ENCODE measurements at regions of chr5 and their contacts with region 1.

Region 1: DNA sequence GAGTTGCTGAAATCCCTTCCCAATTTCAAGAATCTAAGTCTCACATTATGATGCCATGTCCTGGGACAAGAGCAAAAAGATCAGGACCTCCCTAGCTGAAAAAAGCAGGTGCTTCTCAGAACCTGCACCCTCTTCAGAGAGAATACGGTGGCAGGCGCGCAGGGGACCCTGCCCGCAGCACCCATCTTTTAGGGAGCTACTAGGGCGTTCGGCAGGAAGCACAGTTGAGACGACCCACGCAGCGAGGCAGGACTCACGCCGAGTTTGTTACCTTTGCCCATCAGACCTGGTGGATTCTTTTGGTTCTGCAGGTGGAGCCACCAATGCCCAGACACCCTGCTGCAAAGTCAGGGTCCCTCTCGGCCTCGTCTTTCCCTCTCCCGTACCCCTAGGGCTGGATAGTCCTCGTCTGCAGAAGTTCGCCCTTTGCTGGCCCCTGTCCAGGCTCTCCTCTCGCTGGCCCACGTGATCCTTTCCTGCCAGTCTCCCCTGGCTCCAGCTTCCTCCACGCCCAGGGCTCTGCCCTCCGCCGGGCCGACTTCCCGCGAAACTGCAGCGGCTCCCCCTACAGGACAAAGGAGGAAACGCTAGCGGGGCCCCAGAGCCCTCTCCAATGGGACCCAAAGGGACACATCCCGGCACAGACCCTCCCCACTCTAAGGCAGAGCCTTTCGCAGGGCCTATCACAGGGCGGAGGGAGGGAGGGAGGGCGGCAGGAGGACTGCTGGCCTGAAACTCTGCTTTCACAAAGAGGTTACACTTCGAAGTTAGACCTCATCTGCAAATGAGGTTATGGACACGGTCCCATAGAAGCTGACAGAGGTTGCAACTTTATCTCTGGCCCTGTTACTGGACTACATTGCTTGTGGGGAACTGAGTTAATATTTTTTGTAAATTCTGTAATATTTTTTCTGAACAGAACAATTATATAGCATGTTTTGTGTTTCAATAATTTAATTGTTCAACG is 28.8 kb downstream of the TMEM174 start:
- DNase-seq: peak; percentile 96
- ATAC-seq: peak; percentile 99
- H3K4me3 Mint-ChIP-seq: no peak overlapping the region
- H3K27ac Mint-ChIP-seq: no peak overlapping the region
- H3K4me1 Mint-ChIP-seq: peaks cover 9% of the 10 kb centered on the region
- H3K27me3 Mint-ChIP-seq: peaks cover 33% of the 10 kb centered on the region
- CTCF ChIP-seq: peak; percentile 89

Region 2: DNA sequence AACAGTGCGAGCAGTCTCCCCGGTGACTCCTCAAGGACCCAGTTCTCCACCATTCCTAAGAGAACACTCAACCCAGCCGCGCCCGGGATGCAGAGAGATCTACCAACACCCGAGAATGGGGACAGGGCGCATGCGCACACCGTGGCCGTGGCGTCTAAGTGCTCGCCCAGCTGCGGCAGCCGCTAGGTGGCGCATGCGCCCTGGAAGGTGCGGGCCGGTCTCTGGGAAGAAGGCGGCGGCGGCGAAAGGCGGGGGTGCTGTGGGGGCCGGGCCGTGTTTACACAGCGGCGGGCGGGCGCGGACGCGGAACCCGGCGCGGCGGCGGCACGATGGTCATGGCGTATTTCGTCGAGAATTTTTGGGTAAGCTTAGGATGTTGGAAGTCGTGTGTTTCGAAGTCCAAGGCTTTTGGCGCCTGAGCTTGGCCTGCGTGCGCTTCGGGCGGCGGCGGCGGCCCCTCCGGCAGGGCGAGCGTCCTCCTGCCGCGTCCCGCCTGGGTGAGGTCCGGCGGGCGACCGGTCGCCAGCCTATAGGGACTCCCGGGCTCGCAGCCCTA is 246.0 kb before region 1 on chr5 and contains the start of gene FCHO2:
- CTCF ChIA-PET with region 1: interaction called, 14 read pairs
- POLR2A ChIA-PET with region 1: no interaction called
- DNase-seq: peak; percentile 99
- ATAC-seq: peak; percentile 86
- H3K4me3 Mint-ChIP-seq: peak within 1 kb of the TSS; percentile 86
- H3K27ac Mint-ChIP-seq: peak within 1 kb of the TSS; percentile 89
- H3K4me1 Mint-ChIP-seq: peaks cover 31% of the 10 kb centered on the region
- H3K27me3 Mint-ChIP-seq: no peaks in the 10 kb centered on the region; the same call in 1 of the 2 replicates
- CTCF ChIP-seq: peak; percentile 88
- total RNA-seq, gene FCHO2: 11.0 to 14.9 TPM (median 13.9 TPM) in 3 replicates

Region 3: DNA sequence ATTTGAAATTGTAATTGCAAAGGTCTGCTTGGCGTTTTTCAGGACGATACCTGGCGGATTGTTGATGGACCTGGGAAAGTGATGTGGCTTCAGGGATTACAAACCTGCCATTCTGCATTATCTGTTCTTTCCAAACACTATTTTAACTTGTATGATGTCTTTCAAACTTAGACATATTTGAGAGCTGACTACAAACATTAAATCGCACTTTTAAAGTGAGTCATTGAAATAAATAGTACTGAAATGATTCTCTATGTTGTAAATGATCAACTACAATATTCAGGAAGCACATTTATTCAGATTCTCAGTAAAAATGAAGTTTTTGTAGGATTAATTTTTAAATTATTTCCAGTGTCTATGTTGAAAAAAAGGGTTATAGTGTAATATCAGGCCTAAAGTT is 113.8 kb before region 1 on chr5:
- CTCF ChIA-PET with region 1: interaction called, 12 read pairs
- POLR2A ChIA-PET with region 1: no interaction called
- DNase-seq: no peak
- ATAC-seq: no peak
- H3K4me3 Mint-ChIP-seq: no peak overlapping the region
- H3K27ac Mint-ChIP-seq: no peak overlapping the region
- H3K4me1 Mint-ChIP-seq: 0 out of 2 replicates have a peak, but pooled peaks cover 2% of the 10 kb centered on the region
- H3K27me3 Mint-ChIP-seq: no peaks in the 10 kb centered on the region
- CTCF ChIP-seq: no peak

Region 4: DNA sequence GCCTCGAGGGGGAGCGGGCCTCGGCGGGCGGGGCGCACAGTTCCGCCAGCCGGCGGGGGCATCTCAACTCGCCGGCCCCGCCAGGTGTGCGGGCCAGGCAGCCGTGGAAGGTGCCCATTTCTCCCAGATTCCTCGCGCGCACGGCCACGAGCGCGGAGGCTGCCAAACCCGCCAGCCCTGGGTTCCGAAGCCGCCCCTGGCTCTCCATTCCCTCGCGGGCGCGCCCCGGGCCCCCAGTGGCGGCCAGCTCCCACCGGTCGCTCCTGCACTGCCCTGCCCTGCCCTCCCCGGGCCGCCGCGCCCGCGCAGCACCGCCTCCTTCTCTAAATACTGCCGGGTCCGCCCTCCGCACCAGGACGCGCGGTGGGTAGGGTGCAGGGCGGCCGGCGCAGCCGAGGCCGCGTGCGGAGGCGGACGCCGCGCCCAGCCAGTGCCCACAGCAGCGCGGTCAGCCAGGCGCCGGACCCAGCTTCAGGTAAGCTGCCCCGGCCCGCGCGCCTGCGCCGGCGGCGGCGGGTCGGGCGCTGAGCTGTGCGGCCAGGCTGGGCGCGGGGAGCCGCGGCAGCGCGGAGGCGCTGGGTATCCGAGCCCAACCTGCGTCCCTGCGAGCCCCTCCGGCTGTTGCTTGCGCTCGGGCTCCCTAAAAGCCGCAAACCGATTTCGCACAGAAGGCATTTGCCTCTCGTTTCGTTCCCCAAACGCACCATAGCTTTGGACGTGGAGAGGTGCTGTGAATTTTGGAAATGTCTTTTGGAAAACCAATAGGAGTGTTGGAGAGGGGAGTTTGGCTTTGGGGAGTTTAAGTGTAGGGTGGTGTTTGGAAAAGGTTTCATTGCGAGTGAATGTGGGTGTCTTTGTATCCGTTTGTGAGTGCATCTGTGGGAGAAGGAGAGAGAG is 81.4 kb before region 1 on chr5 and contains the start of gene TMEM171:
- CTCF ChIA-PET with region 1: interaction called, 10 read pairs
- POLR2A ChIA-PET with region 1: no interaction called
- DNase-seq: peak; percentile 73
- ATAC-seq: peak; percentile 81
- H3K4me3 Mint-ChIP-seq: peak within 1 kb of the TSS; percentile 79
- H3K27ac Mint-ChIP-seq: no peak within 1 kb of the TSS
- H3K4me1 Mint-ChIP-seq: peaks cover 31% of the 10 kb centered on the region
- H3K27me3 Mint-ChIP-seq: peaks cover 68% of the 10 kb centered on the region
- CTCF ChIP-seq: no peak
- total RNA-seq, gene TMEM171: 0.96 to 1.8 TPM (median 1.7 TPM) in 3 replicates

Region 5: DNA sequence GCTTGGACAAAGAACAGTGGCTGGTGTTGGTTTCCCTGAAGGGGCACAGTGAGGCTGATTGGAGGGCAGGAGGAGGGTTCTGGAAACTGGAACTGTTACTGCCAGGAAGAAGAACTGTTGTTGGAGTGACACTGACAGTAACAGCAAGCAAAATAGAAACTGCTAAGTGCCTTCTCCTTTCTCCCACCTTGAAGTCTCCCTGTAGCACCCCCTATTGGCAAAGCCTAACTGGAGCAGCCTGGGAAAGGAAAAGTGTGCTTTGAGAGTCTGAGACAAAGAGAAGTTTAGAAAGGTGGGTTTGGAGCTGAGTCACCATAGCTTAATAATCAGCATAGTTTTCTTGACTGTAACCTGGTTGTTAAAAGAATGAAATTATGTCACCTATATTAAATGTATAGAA is 31.3 kb before region 1 on chr5:
- CTCF ChIA-PET with region 1: interaction called, 27 read pairs
- POLR2A ChIA-PET with region 1: no interaction called
- DNase-seq: peak; percentile 64
- ATAC-seq: peak; percentile 90
- H3K4me3 Mint-ChIP-seq: no peak overlapping the region
- H3K27ac Mint-ChIP-seq: no peak overlapping the region
- H3K4me1 Mint-ChIP-seq: peaks cover 20% of the 10 kb centered on the region
- H3K27me3 Mint-ChIP-seq: no peaks in the 10 kb centered on the region
- CTCF ChIP-seq: no peak; the same call in 1 of the 2 replicates

Region 6: GRCh38 chr5:73189871-73190376 is 11.9 kb before region 1 on chr5:
- CTCF ChIA-PET with region 1: interaction called, 17 read pairs
- POLR2A ChIA-PET with region 1: no interaction called
- DNase-seq: peak; percentile 50
- ATAC-seq: peak; percentile 61
- H3K4me3 Mint-ChIP-seq: no peak overlapping the region
- H3K27ac Mint-ChIP-seq: no peak overlapping the region
- H3K4me1 Mint-ChIP-seq: peaks cover 20% of the 10 kb centered on the region
- H3K27me3 Mint-ChIP-seq: no peaks in the 10 kb centered on the region
- CTCF ChIP-seq: no peak

Region 7: GRCh38 chr5:73591102-73591695 is 389.4 kb after region 1 on chr5:
- CTCF ChIA-PET with region 1: no interaction called
- POLR2A ChIA-PET with region 1: no interaction called
- DNase-seq: peak; percentile 14
- ATAC-seq: peak; percentile 74
- H3K4me3 Mint-ChIP-seq: no peak overlapping the region
- H3K27ac Mint-ChIP-seq: no peak overlapping the region
- H3K4me1 Mint-ChIP-seq: no peaks in the 10 kb centered on the region
- H3K27me3 Mint-ChIP-seq: no peaks in the 10 kb centered on the region
- CTCF ChIP-seq: peak; percentile 64

Measured in WTC11 (cell line).